ENCODE measurements at regions of chr22 and their contacts with region 1.

Region 1: DNA sequence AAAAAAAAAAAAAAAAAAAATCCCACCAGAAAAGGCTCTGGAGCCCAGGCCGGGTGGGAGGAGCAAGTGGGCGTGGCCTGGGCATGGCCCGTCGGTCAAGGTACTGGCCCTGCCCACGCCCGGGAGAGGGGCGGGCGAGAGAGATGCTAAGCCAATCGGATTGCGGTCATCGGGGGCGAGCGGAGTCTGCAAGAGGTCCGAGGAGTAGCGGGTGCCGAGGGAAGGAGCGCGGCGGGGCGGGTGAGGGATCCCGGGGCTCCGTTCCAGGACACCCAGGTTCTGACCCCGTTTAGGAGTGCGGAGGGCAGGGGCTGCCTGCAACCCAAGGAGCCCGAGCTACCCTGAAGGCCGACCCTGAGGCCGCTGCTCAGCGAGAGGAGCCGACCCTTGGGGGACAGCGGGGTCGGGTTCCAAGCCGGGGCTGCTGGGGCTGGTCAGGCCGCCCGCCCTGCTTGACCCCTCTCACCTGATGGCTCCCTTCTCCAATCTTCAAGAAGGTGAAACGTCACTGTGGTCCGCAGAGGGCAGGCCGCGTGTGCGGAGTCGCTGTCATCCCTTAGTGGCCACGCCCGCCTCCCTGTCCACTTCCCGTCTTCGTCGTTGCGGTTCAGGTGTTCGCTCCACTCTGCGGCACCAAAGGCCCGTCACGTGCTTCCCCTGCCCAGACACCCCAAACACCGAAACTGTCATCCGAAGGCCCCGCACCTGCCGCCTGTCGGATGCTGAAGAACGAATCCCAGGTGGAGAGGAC is 11.1 kb upstream of the TAB1 start:
- DNase-seq: peak; percentile 78
- ATAC-seq: peak; percentile 99
- H3K4me3 ChIP-seq: peak overlapping the region; percentile 40
- H3K27ac ChIP-seq: no peak overlapping the region
- H3K4me1 ChIP-seq: peaks cover 11% of the 10 kb centered on the region
- H3K27me3 ChIP-seq: no peaks in the 10 kb centered on the region
- CTCF ChIP-seq: no peak
- POLR2A ChIP-seq: no peak
- RAD21 ChIP-seq: no peak

Region 2: DNA sequence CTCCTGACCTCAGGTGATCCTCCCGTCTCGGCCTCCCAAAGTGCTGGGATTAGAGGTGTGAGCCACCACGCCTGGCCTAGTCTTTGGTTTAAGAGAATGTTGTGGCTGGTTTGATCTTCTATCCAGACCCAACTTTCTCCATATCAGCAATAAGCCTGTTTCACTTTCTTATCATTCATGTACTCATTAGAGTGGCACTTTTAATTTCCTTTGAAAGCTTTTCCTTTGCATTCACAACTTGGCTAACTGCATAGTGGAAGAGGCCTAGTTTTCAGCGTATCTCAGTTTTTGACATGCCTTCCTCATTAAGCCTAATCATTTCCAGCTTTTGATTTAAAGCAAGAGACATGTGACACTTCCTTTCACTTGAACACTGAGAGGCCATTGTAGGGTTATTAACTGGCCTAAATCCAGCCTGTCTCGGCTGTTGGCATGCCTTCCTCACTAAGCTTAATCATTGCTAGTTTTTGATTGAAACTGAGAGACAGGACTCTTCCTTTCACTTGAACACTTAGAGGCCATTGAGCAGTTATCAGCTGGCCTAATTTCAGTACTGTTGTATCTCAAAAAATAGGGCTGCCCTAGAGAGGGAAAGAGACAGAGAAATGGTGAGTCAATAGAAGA is 55.9 kb before region 1 on chr22:
- CTCF ChIA-PET with region 1: no interaction called
- POLR2A ChIA-PET with region 1: interaction called, 17 read pairs
- dilution Hi-C with region 1: no loop called
- in situ Hi-C with region 1: no loop called
- intact Hi-C with region 1: no loop called
- DNase-seq: no peak
- ATAC-seq: peak; percentile 51
- H3K4me3 ChIP-seq: no peak overlapping the region
- H3K27ac ChIP-seq: no peak overlapping the region
- H3K4me1 ChIP-seq: peaks cover 2% of the 10 kb centered on the region; the same call in 1 of the 2 replicates
- H3K27me3 ChIP-seq: no peaks in the 10 kb centered on the region
- CTCF ChIP-seq: no peak
- POLR2A ChIP-seq: no peak
- RAD21 ChIP-seq: no peak

Region 3: GRCh38 chr22:39469681-39470450 is 81.4 kb after region 1 on chr22:
- CTCF ChIA-PET with region 1: no interaction called
- POLR2A ChIA-PET with region 1: no interaction called
- dilution Hi-C with region 1: no loop called
- in situ Hi-C with region 1: no loop called
- intact Hi-C with region 1: no loop called
- DNase-seq: no peak
- ATAC-seq: no peak
- H3K4me3 ChIP-seq: no peak overlapping the region
- H3K27ac ChIP-seq: no peak overlapping the region
- H3K4me1 ChIP-seq: peaks cover 33% of the 10 kb centered on the region
- H3K27me3 ChIP-seq: no peaks in the 10 kb centered on the region; the same call in 1 of the 2 replicates
- CTCF ChIP-seq: no peak
- POLR2A ChIP-seq: no peak
- RAD21 ChIP-seq: no peak